Heart right ventricle (tissue), 16 donors: ENCODE measurements at regions of chr4 and their contacts with region 1.

Region 1: DNA sequence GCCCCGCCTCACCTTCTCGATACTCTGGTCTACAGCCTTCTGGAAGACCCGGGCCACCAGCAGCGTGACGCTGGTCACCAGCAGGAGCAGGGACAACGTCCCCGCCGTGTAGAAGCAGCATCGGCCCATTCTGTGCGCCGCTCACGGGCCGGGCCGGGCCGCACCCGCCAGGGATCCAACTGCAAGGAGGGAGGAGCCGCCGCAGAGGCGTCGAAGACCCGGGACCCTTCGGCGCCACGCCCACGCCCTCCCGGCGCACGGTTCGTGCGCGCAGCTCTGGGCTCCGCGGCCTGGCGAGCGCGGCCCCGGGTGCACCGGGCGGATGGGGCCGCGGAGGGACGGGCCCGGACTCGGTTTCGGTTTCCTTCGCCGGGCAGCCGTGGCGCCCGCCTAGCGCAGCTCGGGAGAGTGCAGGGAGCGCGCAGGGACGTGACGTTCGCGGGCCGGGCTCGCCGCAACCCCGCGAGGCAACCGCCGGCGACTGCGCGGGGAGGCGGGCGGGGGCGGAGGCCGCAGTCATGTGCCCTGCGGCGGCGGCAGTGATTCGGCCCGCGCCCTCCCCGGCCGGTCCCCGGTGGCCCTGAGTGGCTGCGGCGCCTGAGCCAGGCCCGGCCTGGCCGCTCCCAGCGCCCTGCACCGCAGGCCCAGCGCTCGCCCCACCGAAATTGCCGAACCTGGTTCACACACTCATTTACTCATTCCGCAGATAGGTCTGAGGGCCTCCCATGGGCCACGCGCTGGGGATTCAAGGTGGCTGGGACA is at the start of gene SCARB2:
- DNase-seq: peak; percentile 88 to 92
- ATAC-seq: peak; percentile 92 to 97 (median 96)
- H3K4me3 ChIP-seq: peak within 1 kb of the TSS; percentile 50 to 95 (median 84)
- H3K27ac ChIP-seq: peak within 1 kb of the TSS; percentile 93 to 98 (median 96)
- H3K4me1 ChIP-seq: peaks cover 16 to 77% (median 54%) of the 10 kb centered on the region in 9 donors
- H3K27me3 ChIP-seq: no peaks in the 10 kb centered on the region
- CTCF ChIP-seq: no peak
- total RNA-seq, gene SCARB2: 76.6 to 199 (median 94.9) TPM

Region 2: GRCh38 chr4:76078033-76078613 is 135.5 kb before region 1 on chr4:
- intact Hi-C with region 1: no loop called
- DNase-seq: no peak
- ATAC-seq: peak in 6 of 8 donors; percentile 28 to 56 (median 36)
- H3K4me3 ChIP-seq: peak overlapping the region in 3 of 10 donors; percentile 1 to 16 (median 4)
- H3K27ac ChIP-seq: peak overlapping the region in 9 of 10 donors; percentile 1 to 63 (median 53)
- H3K4me1 ChIP-seq: peaks cover 0 to 17% (median 0%) of the 10 kb centered on the region in 9 donors
- H3K27me3 ChIP-seq: no peaks in the 10 kb centered on the region
- CTCF ChIP-seq: no peak

Region 3: GRCh38 chr4:76148142-76148865 is 65.3 kb before region 1 on chr4 and contains the start of gene NUP54:
- intact Hi-C with region 1: loop called in 2 of 10 experiments (anchors 5 kb)
- DNase-seq: peak; percentile 93
- ATAC-seq: peak; percentile 99 to 100 (median 99)
- H3K4me3 ChIP-seq: peak within 1 kb of the TSS; percentile 75 to 98 (median 89)
- H3K27ac ChIP-seq: peak within 1 kb of the TSS in 9 of 10 donors; percentile 83 to 97 (median 90)
- H3K4me1 ChIP-seq: peaks cover 5 to 37% (median 29%) of the 10 kb centered on the region in 9 donors
- H3K27me3 ChIP-seq: no peaks in the 10 kb centered on the region
- CTCF ChIP-seq: no peak
- total RNA-seq, gene NUP54: 16.1 to 22.6 (median 18.9) TPM

Region 4: GRCh38 chr4:76251441-76252270 is 38.1 kb after region 1 on chr4 and contains the start of gene FAM47E:
- intact Hi-C with region 1: loop called in 1 of 10 experiments (anchors 5 kb)
- DNase-seq: peak; percentile 72 to 78
- ATAC-seq: peak; percentile 95 to 99 (median 98)
- H3K4me3 ChIP-seq: peak within 1 kb of the TSS; percentile 16 to 77 (median 66)
- H3K27ac ChIP-seq: peak within 1 kb of the TSS in 6 of 10 donors; percentile 1 to 54 (median 46)
- H3K4me1 ChIP-seq: peaks cover 0 to 15% (median 7%) of the 10 kb centered on the region in 9 donors
- H3K27me3 ChIP-seq: peaks cover 0 to 62% (median 17%) of the 10 kb centered on the region in 7 donors
- CTCF ChIP-seq: peak in 8 of 9 donors; percentile 24 to 61 (median 47)
- total RNA-seq, gene FAM47E: 2.1 to 6.3 (median 3.1) TPM

Region 5: GRCh38 chr4:76293772-76294171 is 80.2 kb after region 1 on chr4:
- intact Hi-C with region 1: no loop called
- DNase-seq: no peak
- ATAC-seq: peak in 6 of 8 donors; percentile 53 to 96 (median 84)
- H3K4me3 ChIP-seq: no peak overlapping the region
- H3K27ac ChIP-seq: peak overlapping the region in 2 of 10 donors; percentile 1 to 8
- H3K4me1 ChIP-seq: peaks cover 0 to 15% (median 5%) of the 10 kb centered on the region in 9 donors
- H3K27me3 ChIP-seq: no peaks in the 10 kb centered on the region
- CTCF ChIP-seq: no peak

Region 6: DNA sequence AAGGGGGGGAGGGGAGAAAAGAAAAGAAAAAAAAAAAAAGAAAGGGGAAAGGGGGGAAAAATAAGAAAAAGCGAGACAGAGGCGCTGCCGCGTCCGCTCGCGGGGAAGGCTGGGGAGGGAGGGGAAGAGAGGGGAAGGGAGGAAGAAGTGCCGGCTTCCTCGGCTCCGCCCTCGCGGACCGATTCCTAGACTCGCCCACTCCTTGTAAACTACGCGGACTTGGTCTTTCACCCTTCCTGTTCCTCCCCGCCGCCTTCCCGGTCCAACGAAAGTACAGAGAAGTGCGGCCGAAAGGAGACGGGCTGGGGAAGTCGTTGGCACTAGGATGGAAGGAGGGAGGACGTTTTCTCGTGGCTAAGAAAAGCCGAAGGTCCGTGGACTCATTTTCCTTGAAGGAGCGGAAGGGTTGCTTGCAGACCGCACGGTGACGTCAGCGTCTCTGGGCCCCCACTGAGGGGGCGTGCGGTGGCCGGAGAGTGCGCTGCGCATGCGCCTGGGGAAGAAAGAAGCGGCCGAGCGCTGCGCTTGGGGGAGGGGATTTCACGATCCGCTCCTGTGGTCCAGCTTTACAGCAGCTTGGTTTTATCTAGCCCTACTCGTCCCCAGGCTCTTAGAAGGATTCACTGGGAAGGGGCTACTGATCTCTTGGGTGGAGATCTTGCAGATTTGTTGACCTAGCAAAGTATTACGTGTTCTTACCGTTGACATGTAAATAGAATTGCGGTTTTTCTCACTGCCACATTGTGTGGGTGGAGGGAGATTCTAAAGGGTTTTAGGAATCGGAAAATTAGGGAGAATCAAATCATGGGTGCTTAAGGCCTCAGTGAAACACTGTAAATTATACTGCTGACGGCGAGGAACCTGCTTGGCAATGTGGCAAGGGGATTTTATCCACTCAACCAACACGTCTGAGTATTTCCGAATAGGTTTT is 862.5 kb after region 1 on chr4 and contains the start of gene CCNI:
- intact Hi-C with region 1: loop called in 1 of 10 experiments (anchors 10 kb)
- DNase-seq: peak; percentile 96
- ATAC-seq: peak; percentile 94 to 98 (median 95)
- H3K4me3 ChIP-seq: peak within 1 kb of the TSS; percentile 66 to 92 (median 80)
- H3K27ac ChIP-seq: peak within 1 kb of the TSS; percentile 91 to 100 (median 99)
- H3K4me1 ChIP-seq: peaks cover 0 to 62% (median 35%) of the 10 kb centered on the region in 9 donors
- H3K27me3 ChIP-seq: no peaks in the 10 kb centered on the region
- CTCF ChIP-seq: no peak
- total RNA-seq, gene CCNI: 223 to 354 (median 306) TPM